ENCODE measurements at regions of chr11 and their contacts with region 1.

Region 1: GRCh38 chr11:72024069-72024754 is 25.5 kb downstream of the IL18BP start:
- DNase-seq: no peak
- H3K4me3 ChIP-seq: no peak overlapping the region
- H3K4me3 Mint-ChIP-seq: no peak overlapping the region
- H3K27ac Mint-ChIP-seq: no peak overlapping the region
- H3K4me1 ChIP-seq: 0 out of 2 replicates have a peak, but pooled peaks cover 4% of the 10 kb centered on the region
- H3K4me1 Mint-ChIP-seq: peaks cover 8% of the 10 kb centered on the region
- H3K27me3 ChIP-seq: no peaks in the 10 kb centered on the region
- H3K27me3 Mint-ChIP-seq: no peaks in the 10 kb centered on the region
- CTCF ChIP-seq: no peak

Region 2: GRCh38 chr11:72080256-72080974 is 56.2 kb after region 1 on chr11 and contains the starts of genes LRRC51 and NUMA1:
- CTCF ChIA-PET with region 1: interaction called, 43 read pairs
- POLR2A ChIA-PET with region 1: no interaction called
- intact Hi-C with region 1: loop called (anchors 2 kb)
- DNase-seq: peak; percentile 100
- H3K4me3 ChIP-seq: peak within 1 kb of the TSS; percentile 92
- H3K4me3 Mint-ChIP-seq: peak within 1 kb of the TSS; percentile 86
- H3K27ac Mint-ChIP-seq: peak within 1 kb of the TSS; percentile 99
- H3K4me1 ChIP-seq: peaks cover 19% of the 10 kb centered on the region
- H3K4me1 Mint-ChIP-seq: peaks cover 28% of the 10 kb centered on the region
- H3K27me3 ChIP-seq: no peaks in the 10 kb centered on the region
- H3K27me3 Mint-ChIP-seq: no peaks in the 10 kb centered on the region
- CTCF ChIP-seq: no peak
- total RNA-seq, gene LRRC51: 13.7 and 13.8 TPM in 2 replicates
- total RNA-seq, gene NUMA1: 182 and 190 TPM in 2 replicates

Region 3: DNA sequence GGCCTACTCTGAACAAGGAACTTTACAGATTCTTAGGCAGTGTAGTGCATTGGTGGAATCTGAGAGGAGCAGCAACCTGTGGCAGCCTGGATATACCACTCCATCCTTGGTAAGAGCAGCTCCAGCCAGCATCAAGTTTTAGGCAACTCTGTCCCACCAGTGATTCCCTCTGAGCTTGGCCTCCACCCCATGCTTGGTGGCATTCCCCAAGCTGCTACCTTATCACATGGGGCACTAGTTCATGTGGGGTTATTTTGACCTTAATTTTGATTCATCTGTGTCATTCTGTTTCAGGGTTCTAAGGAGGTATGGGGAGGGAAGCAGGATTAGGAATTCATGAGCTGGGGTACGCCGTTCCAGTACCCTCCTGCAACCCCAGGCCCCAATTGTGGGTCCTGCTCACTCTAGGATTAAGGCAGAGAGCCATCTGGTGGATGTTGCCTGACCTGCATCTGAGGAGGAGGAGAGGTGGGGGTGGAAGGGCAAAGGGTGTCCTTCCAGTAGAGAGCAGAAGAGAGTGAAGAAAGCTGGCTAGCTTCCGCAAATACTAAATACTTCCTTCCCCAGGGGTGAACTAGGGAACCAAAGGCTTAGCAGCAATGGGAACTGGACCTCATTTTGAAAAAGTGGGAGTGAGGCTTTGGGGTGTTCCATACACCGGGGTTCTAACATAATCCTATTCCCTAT is 66.9 kb after region 1 on chr11:
- CTCF ChIA-PET with region 1: interaction called, 158 read pairs
- POLR2A ChIA-PET with region 1: interaction called, 13 read pairs
- intact Hi-C with region 1: loop called (anchors 1 kb)
- DNase-seq: peak; percentile 88 to 91
- H3K4me3 ChIP-seq: no peak overlapping the region
- H3K4me3 Mint-ChIP-seq: no peak overlapping the region
- H3K27ac Mint-ChIP-seq: no peak overlapping the region
- H3K4me1 ChIP-seq: peaks cover 6% of the 10 kb centered on the region
- H3K4me1 Mint-ChIP-seq: peaks cover 14% of the 10 kb centered on the region
- H3K27me3 ChIP-seq: no peaks in the 10 kb centered on the region
- H3K27me3 Mint-ChIP-seq: no peaks in the 10 kb centered on the region
- CTCF ChIP-seq: peak; percentile 97 to 99

Region 4: GRCh38 chr11:72141066-72141465 is 116.9 kb after region 1 on chr11:
- CTCF ChIA-PET with region 1: interaction called, 30 read pairs
- POLR2A ChIA-PET with region 1: no interaction called
- intact Hi-C with region 1: loop called (anchors 2 kb)
- DNase-seq: no peak
- H3K4me3 ChIP-seq: no peak overlapping the region
- H3K4me3 Mint-ChIP-seq: no peak overlapping the region
- H3K27ac Mint-ChIP-seq: no peak overlapping the region
- H3K4me1 ChIP-seq: peaks cover 8% of the 10 kb centered on the region
- H3K4me1 Mint-ChIP-seq: peaks cover 22% of the 10 kb centered on the region
- H3K27me3 ChIP-seq: no peaks in the 10 kb centered on the region
- H3K27me3 Mint-ChIP-seq: no peaks in the 10 kb centered on the region
- CTCF ChIP-seq: no peak

Region 5: GRCh38 chr11:72338741-72339140 is 314.5 kb after region 1 on chr11:
- CTCF ChIA-PET with region 1: no interaction called
- POLR2A ChIA-PET with region 1: no interaction called
- intact Hi-C with region 1: no loop called
- DNase-seq: no peak
- H3K4me3 ChIP-seq: no peak overlapping the region
- H3K4me3 Mint-ChIP-seq: no peak overlapping the region
- H3K27ac Mint-ChIP-seq: no peak overlapping the region
- H3K4me1 ChIP-seq: no peaks in the 10 kb centered on the region
- H3K4me1 Mint-ChIP-seq: peaks cover 4% of the 10 kb centered on the region
- H3K27me3 ChIP-seq: no peaks in the 10 kb centered on the region
- H3K27me3 Mint-ChIP-seq: no peaks in the 10 kb centered on the region
- CTCF ChIP-seq: no peak